ENCODE measurements at regions of chr4 and their contacts with region 1.

Region 1: DNA sequence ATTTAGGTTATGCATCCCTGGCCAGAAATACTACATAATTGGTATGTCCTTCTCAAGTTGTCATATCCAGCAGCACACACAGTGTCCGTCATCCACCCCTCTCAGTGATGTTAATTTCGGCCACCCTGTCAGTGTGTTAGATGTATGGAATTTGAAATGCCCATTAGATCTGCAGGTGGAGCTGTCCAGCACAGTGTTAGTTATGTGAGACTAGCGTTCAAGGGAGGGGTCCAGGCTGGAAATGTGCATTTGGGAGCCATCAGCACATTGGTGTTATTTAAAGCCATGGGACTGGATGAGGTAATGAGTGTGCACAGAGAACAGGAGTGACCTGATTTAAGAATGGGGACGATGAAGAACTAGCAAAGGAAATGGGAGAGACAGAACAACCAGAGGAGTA is 22.4 kb downstream of the ANAPC4 start:
- H3K4me3 Mint-ChIP-seq: no peak overlapping the region
- H3K27ac Mint-ChIP-seq: no peak overlapping the region
- H3K4me1 Mint-ChIP-seq: no peaks in the 10 kb centered on the region
- H3K27me3 Mint-ChIP-seq: no peaks in the 10 kb centered on the region

Region 2: GRCh38 chr4:24537025-24537424 is 862.5 kb before region 1 on chr4:
- intact Hi-C with region 1: loop called (anchors 10 kb)
- H3K4me3 Mint-ChIP-seq: no peak overlapping the region
- H3K27ac Mint-ChIP-seq: no peak overlapping the region
- H3K4me1 Mint-ChIP-seq: no peaks in the 10 kb centered on the region
- H3K27me3 Mint-ChIP-seq: no peaks in the 10 kb centered on the region